ENCODE measurements at regions of chr14 and their contacts with region 1.

Region 1: GRCh38 chr14:104708606-104709268 is 15.3 kb upstream of the ADSS1 start:
- DNase-seq: peak; percentile 81 to 91
- ATAC-seq: peak; percentile 55 to 79
- H3K4me3 ChIP-seq: no peak overlapping the region
- H3K27ac ChIP-seq: peak overlapping the region in 1 of 2 experiments; percentile 81; a peak in 3 of 6 replicates
- H3K4me1 ChIP-seq: peaks cover 32% of the 10 kb centered on the region
- CTCF ChIP-seq: peak; percentile 84
- EP300 ChIP-seq: no peak
- POLR2A ChIP-seq: no peak
- RAD21 ChIP-seq: peak; percentile 84 to 85

Region 2: GRCh38 chr14:104657101-104657524 is 51.6 kb before region 1 on chr14:
- CTCF ChIA-PET with region 1: interaction called, 110 read pairs
- POLR2A ChIA-PET with region 1: no interaction called
- DNase-seq: no peak
- ATAC-seq: peak; percentile 55 to 66; a peak in 5 of 6 replicates
- H3K4me3 ChIP-seq: no peak overlapping the region
- H3K27ac ChIP-seq: no peak overlapping the region
- H3K4me1 ChIP-seq: no peaks in the 10 kb centered on the region
- CTCF ChIP-seq: no peak
- EP300 ChIP-seq: no peak
- POLR2A ChIP-seq: no peak
- RAD21 ChIP-seq: no peak

Region 3: DNA sequence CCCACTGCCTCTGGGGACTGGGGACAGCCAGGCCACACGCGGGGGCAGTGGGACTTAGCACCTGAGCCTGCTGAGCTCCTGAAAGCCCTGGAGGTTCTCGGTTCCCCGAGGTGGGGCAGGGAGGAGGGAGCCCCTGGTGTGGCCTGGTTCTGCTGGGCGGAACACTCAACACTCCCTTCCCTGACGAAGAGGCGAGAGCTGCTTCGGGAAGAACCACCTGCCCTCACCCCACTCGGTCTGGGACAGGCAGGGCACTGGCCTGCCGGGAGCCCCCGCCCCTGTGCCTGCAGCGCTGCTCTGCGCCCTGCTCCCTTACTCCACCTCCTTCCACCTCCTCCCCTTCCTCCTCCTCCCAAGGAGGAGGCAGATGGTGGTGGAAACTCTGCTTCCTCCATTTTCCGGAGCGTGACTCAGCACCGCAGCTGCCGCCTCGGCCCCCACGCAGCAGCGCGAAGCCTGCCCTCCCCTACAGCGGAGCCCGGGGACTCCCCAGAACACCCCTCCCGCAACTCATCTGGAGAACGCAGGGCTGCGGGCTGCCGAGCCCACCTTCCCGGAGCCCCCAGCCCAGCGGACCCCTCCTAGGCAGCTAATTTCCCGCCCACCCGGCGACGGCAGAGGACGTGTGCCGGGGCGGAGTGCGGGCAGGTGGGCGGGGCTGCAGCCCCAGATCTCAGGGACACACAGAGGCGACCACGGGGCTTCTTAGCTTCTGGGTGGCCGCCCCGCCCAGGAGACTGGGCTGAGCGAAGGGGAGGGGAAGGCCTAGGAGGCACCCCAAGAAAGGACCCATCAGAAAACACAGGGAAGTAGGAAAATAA is 31.0 kb before region 1 on chr14:
- CTCF ChIA-PET with region 1: interaction called, 43 read pairs
- POLR2A ChIA-PET with region 1: interaction called, 4 read pairs
- DNase-seq: peak; percentile 75 to 85
- ATAC-seq: peak; percentile 16 to 49
- H3K4me3 ChIP-seq: peak overlapping the region; percentile 39
- H3K27ac ChIP-seq: peak overlapping the region; percentile 98 to 100
- H3K4me1 ChIP-seq: peaks cover 61% of the 10 kb centered on the region
- CTCF ChIP-seq: no peak
- EP300 ChIP-seq: no peak
- POLR2A ChIP-seq: peak; percentile 68
- RAD21 ChIP-seq: no peak

Region 4: GRCh38 chr14:104723648-104724406 is 15.1 kb after region 1 on chr14 and contains the start of gene ADSS1:
- CTCF ChIA-PET with region 1: interaction called, 43 read pairs
- POLR2A ChIA-PET with region 1: no interaction called
- DNase-seq: peak; percentile 70 to 74
- ATAC-seq: peak; percentile 35 to 51
- H3K4me3 ChIP-seq: peak within 1 kb of the TSS; percentile 71
- H3K27ac ChIP-seq: peak within 1 kb of the TSS; percentile 82 to 92
- H3K4me1 ChIP-seq: peaks cover 46% of the 10 kb centered on the region
- CTCF ChIP-seq: peak; percentile 96
- EP300 ChIP-seq: no peak
- POLR2A ChIP-seq: peak; percentile 95
- RAD21 ChIP-seq: peak in 1 of 2 experiments; percentile 46; a peak in 3 of 5 replicates
- polyA plus RNA-seq, gene ADSS1: 8.8 and 10.1 TPM in 2 replicates

Region 5: GRCh38 chr14:104752735-104753531 is 44.2 kb after region 1 on chr14 and contains the start of gene SIVA1:
- CTCF ChIA-PET with region 1: no interaction called
- POLR2A ChIA-PET with region 1: no interaction called
- DNase-seq: peak; percentile 98 to 100
- ATAC-seq: peak; percentile 92 to 95
- H3K4me3 ChIP-seq: peak within 1 kb of the TSS; percentile 100
- H3K27ac ChIP-seq: peak within 1 kb of the TSS; percentile 93 to 96
- H3K4me1 ChIP-seq: peaks cover 28% of the 10 kb centered on the region
- CTCF ChIP-seq: no peak
- EP300 ChIP-seq: no peak
- POLR2A ChIP-seq: peak; percentile 86
- RAD21 ChIP-seq: no peak
- polyA plus RNA-seq, gene SIVA1: 90.0 and 94.2 TPM in 2 replicates

Region 6: DNA sequence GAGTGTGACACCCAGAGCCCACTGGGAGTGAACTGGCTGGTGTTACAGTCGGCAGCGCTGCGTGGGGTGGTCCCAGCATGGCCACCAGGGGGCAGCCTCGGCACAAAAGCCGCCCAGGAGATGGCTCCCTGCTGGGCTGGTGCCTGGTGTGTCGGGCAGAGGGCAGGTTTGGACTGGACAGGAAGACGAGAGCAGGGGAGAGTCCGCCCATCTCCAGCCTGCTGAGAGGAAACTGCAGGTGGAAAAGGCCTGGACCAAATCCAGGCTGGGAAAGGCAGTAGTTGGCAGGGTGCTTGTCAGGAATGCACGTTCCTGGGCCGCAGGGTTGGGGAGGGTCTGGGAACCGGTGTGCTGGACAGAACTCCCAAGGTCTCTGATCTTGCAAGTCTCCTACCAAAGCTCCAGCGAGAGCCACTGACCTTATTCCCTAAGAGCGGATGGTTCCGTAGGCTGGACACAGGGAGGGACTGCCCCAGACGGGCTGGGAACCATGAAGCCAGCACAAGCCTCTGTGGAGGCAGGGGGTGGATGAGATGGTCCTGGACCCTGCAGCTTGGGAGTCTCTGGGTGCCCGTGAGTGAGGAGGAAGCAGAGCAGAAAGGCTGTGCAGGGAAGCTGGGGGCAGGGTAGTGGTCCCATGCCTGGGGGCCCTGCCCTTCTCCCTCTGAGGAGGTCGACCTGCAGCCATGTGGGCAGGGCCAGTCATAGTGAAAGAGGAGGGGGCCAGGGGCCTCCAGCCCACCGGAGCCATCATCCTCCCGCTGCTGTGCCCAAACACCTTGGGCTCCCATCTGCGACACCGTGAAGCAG is 267.7 kb after region 1 on chr14:
- CTCF ChIA-PET with region 1: no interaction called
- POLR2A ChIA-PET with region 1: no interaction called
- DNase-seq: peak; percentile 64 to 90
- ATAC-seq: peak in 1 of 2 experiments; percentile 56; a peak in 3 of 6 replicates
- H3K4me3 ChIP-seq: peak overlapping the region; percentile 63
- H3K27ac ChIP-seq: peak overlapping the region; percentile 97 to 99
- H3K4me1 ChIP-seq: peaks cover 81% of the 10 kb centered on the region
- CTCF ChIP-seq: peak; percentile 91
- EP300 ChIP-seq: no peak
- POLR2A ChIP-seq: 0 out of 2 replicates have a peak, but pooled peaks have one; percentile 21
- RAD21 ChIP-seq: peak; percentile 87 to 92

Measured in A549 (cell line).